Dendritic cell treated with granulocyte-macrophage colony-stimulating factor and Interleukin-4, amounts not matched to agents 40 ng/mL and 50 ng/mL, for 4 days (primary cell): ENCODE measurements at regions of chr10 and their contacts with region 1.

Region 1: GRCh38 chr10:106836933-106837663 is 327.4 kb downstream of the SORCS1 start:
- H3K4me3 Mint-ChIP-seq: peak overlapping the region; percentile 23
- H3K27ac Mint-ChIP-seq: peak overlapping the region; percentile 87
- H3K4me1 Mint-ChIP-seq: peaks cover 45% of the 10 kb centered on the region
- H3K27me3 Mint-ChIP-seq: no peaks in the 10 kb centered on the region

Region 2: DNA sequence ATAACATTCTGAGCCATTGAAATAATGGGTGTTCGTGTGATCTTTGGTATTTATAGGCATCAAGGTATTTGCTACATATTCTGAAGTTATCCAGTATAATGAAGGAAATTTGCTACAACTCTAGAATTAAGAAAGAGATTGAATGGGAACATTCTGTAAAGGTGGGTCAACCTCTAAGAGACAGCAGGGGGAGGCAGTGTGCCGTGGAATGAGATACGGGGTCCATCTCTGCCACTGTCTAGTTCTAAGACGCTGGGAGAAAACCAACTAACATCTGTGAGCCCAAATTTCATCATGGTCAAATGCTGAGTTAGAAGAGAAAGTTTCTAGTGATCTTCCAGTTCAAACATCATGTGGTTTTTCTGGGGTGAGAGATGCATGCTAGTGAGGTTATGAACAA is 41.5 kb before region 1 on chr10:
- intact Hi-C with region 1: loop called (anchors 5 kb)
- H3K4me3 Mint-ChIP-seq: no peak overlapping the region
- H3K27ac Mint-ChIP-seq: no peak overlapping the region
- H3K4me1 Mint-ChIP-seq: peaks cover 9% of the 10 kb centered on the region
- H3K27me3 Mint-ChIP-seq: peaks cover 4% of the 10 kb centered on the region

Region 3: DNA sequence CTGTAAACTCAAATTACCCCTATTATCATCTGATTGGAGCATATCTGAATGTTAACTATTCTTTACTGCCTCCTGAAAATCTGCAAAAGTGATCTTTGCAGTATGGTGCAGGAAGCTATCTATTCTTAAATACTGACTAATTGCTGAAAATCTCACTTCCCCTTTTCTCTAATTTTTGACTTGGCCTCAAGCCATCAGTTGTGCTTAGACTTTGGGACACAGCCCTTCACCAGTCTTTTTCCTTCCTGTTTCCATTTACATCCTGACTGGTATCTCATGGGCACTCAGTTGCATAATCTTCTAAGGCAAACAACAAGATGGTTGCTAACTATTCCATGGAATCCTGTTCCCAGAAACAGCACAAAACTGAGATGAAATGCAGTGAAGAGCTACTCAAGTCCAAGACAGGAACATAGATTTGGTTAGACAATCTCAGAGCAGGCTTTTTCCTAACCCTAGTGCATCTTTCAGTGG is 98.9 kb after region 1 on chr10:
- intact Hi-C with region 1: loop called (anchors 1 kb)
- H3K4me3 Mint-ChIP-seq: no peak overlapping the region
- H3K27ac Mint-ChIP-seq: peak overlapping the region; percentile 55
- H3K4me1 Mint-ChIP-seq: peaks cover 49% of the 10 kb centered on the region
- H3K27me3 Mint-ChIP-seq: no peaks in the 10 kb centered on the region

Region 4: DNA sequence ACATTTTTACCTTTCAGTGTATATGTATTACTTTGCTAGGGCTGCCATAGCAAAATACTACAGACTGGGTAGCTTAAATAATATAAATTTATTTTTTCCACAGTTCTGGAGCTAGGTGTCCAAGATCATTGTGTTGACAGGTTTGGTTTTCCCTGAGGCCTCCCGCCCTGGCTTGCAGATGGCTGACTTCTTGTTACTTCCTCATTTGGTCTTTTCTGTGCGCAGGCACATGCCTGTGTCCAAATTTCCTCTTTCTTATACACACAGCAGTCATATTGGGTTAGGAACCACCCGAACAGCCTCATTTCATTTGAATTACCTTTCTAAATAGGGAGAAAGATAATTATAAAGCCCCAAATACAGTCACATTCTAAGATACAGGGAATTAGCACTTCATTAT is 849.0 kb after region 1 on chr10:
- intact Hi-C with region 1: loop called (anchors 10 kb)
- H3K4me3 Mint-ChIP-seq: no peak overlapping the region
- H3K27ac Mint-ChIP-seq: peak overlapping the region; percentile 74
- H3K4me1 Mint-ChIP-seq: peaks cover 44% of the 10 kb centered on the region
- H3K27me3 Mint-ChIP-seq: no peaks in the 10 kb centered on the region